Activated CD4-positive, alpha-beta memory T cell treated with anti-CD3 and anti-CD28 coated beads, Interleukin-2, amount 10 ng/mL, durations not matched to agents 7 days and 5 days (primary cell): ENCODE measurements at regions of chr9 and their contacts with region 1.

Region 1: DNA sequence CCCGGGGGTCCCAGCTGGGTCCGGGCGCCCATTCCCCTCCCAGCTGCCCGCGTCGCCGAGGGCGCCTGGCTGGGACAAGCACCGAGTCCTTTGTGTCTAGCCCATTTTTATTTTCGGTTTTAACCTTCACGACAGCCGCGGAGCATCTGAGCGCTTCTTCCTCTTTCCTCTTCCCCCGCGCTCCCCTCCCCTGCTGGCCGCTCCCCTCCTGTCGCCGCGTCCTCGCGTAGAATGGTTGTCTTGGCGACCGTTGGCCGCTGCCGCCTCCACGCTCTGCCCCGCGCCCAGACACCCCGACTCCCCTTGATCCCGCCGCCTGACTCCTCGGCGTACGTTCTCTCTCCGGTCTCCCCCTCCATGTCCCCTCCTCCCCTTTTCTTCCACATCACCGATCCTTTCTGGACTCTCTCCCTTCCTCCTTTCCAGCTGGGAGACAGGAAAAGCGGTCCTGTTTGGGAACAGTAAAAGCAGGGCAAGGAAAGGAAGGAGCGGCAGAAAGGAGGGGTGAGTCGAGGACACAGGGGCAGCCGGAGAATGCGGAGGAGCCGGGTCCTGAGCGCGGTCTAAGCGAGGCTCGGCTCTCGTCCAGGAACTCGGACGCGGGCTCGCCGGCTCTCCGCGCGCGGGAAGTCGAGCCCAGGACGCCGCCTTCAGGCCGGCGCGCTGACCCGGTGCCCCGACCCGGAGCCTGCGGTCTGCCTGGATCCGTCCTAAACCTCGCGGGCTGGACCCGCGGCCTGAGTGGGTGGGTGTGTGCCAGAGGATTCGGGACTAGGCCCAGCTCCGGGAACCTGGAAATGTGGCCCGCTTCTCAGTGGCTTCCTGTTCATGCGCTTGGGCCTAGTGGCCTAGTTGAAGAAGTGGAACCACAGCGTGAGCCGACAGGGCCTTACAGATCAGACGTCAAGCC is 841 bp downstream of the CDKN2B-AS1 start:
- DNase-seq: peak; percentile 89
- H3K4me3 Mint-ChIP-seq: peak overlapping the region; percentile 96
- H3K27ac Mint-ChIP-seq: peak overlapping the region; percentile 98
- H3K4me1 Mint-ChIP-seq: peaks cover 34% of the 10 kb centered on the region
- H3K27me3 Mint-ChIP-seq: peaks cover 14% of the 10 kb centered on the region

Region 2: DNA sequence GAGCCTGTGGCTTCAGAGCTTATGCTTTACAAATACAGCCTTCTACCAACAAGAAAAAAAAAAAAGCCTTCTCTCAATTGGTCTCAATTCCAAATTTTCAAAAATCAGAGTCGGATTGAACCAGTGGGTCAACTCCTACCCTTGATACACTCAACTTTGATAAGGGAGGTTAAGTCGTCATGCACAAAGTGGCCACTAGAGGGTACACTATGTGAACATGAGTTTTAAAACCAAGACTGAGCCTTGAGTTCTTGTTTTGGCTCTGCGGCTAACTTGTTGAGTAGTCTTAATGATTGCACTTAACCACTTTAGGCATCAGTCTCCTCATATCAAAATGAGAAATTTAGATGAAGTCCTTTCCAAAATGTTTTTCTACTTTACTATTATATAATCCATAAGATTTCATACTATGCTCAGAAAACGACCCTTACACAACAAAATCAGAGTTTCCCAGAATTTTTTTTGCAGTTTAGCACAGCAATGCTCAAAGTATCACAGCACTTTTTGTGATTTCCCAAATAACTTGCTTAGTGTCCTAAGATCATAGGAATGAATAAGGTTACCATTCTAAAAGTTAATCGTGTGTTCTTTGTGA is 285.9 kb before region 1 on chr9:
- CTCF ChIA-PET with region 1: no interaction called
- POLR2A ChIA-PET with region 1: no interaction called
- DNase-seq: peak; percentile 61
- H3K4me3 Mint-ChIP-seq: no peak overlapping the region
- H3K27ac Mint-ChIP-seq: no peak overlapping the region
- H3K4me1 Mint-ChIP-seq: no peaks in the 10 kb centered on the region
- H3K27me3 Mint-ChIP-seq: peaks cover 17% of the 10 kb centered on the region

Region 3: DNA sequence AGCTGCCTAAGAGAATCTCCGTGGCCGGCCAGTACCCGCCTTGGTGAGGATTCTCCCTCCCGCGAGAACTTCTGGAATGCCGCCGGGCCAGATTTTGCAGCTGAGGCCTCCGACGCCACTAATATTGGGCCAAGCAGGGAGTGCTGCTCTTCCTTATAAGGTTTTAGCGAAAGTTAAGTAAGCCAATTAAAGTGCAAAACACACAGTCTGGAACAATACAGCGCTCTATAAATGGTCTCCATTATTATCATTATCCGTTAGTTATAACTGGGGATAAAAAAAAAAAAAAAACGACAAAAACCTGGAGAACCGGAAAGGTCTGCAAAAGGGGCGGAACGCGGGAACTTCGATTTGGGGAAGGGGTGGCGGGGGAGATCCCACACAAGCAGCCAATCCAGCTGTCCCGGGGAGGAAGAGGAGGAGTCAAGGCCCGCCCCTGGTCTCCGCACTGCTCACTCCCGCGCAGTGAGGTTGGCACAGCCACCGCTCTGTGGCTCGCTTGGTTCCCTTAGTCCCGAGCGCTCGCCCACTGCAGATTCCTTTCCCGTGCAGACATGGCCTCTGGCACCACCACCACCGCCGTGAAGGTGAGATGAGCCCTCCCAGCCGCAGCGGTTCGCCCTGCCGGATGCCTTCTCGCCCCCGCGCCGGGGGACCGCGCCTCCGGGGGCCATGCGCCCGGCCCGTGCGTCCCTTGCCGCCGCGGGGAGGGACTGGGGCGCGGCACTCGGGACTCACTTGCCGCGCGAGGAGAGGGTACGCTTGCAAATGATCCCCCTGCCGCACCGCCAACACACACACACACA is 193.0 kb before region 1 on chr9 and contains the start of gene MTAP:
- CTCF ChIA-PET with region 1: interaction called, 3 read pairs
- POLR2A ChIA-PET with region 1: interaction called, 20 read pairs
- DNase-seq: peak; percentile 72
- H3K4me3 Mint-ChIP-seq: peak within 1 kb of the TSS; percentile 98
- H3K27ac Mint-ChIP-seq: peak within 1 kb of the TSS; percentile 93
- H3K4me1 Mint-ChIP-seq: peaks cover 46% of the 10 kb centered on the region
- H3K27me3 Mint-ChIP-seq: peaks cover 30% of the 10 kb centered on the region
- total RNA-seq, gene MTAP: 43.4 to 44.9 TPM